AG04449 (cell line): ENCODE measurements at regions of chr6 and their contacts with region 1.

Region 1: DNA sequence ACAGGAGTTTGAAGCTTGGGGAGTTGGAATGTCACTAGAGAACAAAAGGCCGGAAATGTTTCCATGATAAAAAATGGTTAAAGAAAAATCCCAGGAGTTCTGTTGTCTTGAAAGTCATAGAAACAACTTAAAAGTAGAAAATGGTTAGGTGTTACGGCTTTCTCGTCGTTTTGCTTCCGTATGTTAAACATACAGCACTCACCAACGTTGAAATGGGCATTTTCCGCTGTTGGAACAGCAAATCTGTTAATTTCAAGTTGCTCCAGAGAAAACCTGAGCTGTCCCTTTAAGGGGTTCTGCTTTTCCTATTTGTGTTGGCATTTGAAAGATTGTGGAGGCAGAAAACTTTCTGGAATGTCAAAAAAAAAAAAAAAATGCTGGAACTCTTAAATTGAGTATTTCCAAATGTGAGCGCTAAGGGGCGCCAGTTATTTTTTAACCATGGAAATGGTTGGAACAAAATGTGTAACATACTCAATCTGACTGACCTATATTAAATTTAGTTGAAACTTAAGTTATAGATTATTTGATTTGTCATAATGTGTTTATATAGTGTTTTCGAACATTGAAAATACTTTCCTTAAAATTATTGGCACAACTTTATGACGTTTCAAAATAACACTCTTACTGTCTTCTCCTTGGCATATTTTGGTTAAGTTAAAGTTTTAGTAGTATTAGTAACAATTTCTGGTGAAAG is 2.2 kb downstream of the QKI start:
- DNase-seq: peak; percentile 49
- H3K4me3 ChIP-seq: peak overlapping the region; percentile 80
- CTCF ChIP-seq: peak; percentile 25

Region 2: DNA sequence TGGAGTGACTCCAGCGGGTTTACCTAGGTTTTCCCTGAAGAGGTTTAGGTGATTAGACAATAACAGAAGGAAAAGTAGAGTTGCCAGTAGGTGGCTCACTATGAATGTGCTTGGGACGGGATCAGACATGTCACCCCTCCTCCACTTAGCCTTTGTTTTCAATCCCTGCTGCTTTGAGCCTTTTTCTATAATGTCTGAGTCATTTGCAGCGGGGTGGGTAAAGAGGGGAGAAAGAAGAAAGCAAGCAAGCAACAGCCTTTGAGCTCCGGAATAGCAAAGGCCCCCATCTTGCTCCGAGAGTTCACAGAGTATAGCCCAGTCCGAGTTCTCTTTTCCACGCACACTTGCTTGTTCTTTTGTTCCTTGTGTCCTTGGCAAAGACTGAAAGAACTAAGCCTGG is 559.8 kb before region 1 on chr6:
- CTCF ChIA-PET with region 1: interaction called, 11 read pairs
- POLR2A ChIA-PET with region 1: no interaction called
- DNase-seq: peak; percentile 26
- H3K4me3 ChIP-seq: peak overlapping the region; percentile 32
- CTCF ChIP-seq: peak; percentile 71

Region 3: GRCh38 chr6:163281656-163282055 is 135.0 kb before region 1 on chr6:
- CTCF ChIA-PET with region 1: no interaction called
- POLR2A ChIA-PET with region 1: no interaction called
- DNase-seq: no peak
- H3K4me3 ChIP-seq: no peak overlapping the region
- CTCF ChIP-seq: no peak

Region 4: GRCh38 chr6:163956571-163957407 is 540.1 kb after region 1 on chr6:
- CTCF ChIA-PET with region 1: interaction called, 13 read pairs
- POLR2A ChIA-PET with region 1: no interaction called
- DNase-seq: no peak
- H3K4me3 ChIP-seq: no peak overlapping the region
- CTCF ChIP-seq: peak; percentile 76